PC-3 (cell line): ENCODE measurements at regions of chr20 and their contacts with region 1.

Region 1: GRCh38 chr20:62136283-62137091 is 6.7 kb downstream of the PSMA7 start:
- DNase-seq: peak; percentile 82
- ATAC-seq: peak; percentile 68
- H3K4me3 ChIP-seq: no peak overlapping the region
- H3K27ac ChIP-seq: no peak overlapping the region
- H3K4me1 ChIP-seq: peaks cover 10% of the 10 kb centered on the region
- H3K27me3 ChIP-seq: no peaks in the 10 kb centered on the region
- CTCF ChIP-seq: peak; percentile 96

Region 2: GRCh38 chr20:61649105-61649878 is 487.2 kb before region 1 on chr20:
- CTCF ChIA-PET with region 1: no interaction called
- POLR2A ChIA-PET with region 1: no interaction called
- intact Hi-C with region 1: no loop called
- DNase-seq: no peak
- ATAC-seq: no peak
- H3K4me3 ChIP-seq: no peak overlapping the region
- H3K27ac ChIP-seq: no peak overlapping the region
- H3K4me1 ChIP-seq: no peaks in the 10 kb centered on the region
- H3K27me3 ChIP-seq: peaks cover 77% of the 10 kb centered on the region
- CTCF ChIP-seq: no peak

Region 3: GRCh38 chr20:62065669-62066338 is 70.7 kb before region 1 on chr20 and contains the start of gene TAF4:
- CTCF ChIA-PET with region 1: no interaction called
- POLR2A ChIA-PET with region 1: no interaction called
- intact Hi-C with region 1: loop called (anchors 2 kb)
- DNase-seq: peak; percentile 78
- ATAC-seq: peak; percentile 47
- H3K4me3 ChIP-seq: peak within 1 kb of the TSS; percentile 83
- H3K27ac ChIP-seq: peak within 1 kb of the TSS; percentile 19; the same call in 1 of the 2 replicates
- H3K4me1 ChIP-seq: peaks cover 39% of the 10 kb centered on the region
- H3K27me3 ChIP-seq: no peaks in the 10 kb centered on the region
- CTCF ChIP-seq: no peak
- total RNA-seq, gene TAF4: 9.6 and 15.1 TPM in 2 replicates